MCF 10A (cell line): ENCODE measurements at regions of chr18 and their contacts with region 1.

Region 1: GRCh38 chr18:54269893-54270844 is 852 bp downstream of the POLI start:
- DNase-seq: peak; percentile 75
- H3K4me3 Mint-ChIP-seq: peak overlapping the region; percentile 76
- H3K27ac Mint-ChIP-seq: peak overlapping the region; percentile 90
- H3K4me1 Mint-ChIP-seq: peaks cover 13% of the 10 kb centered on the region
- H3K27me3 Mint-ChIP-seq: no peaks in the 10 kb centered on the region
- CTCF ChIP-seq: peak; percentile 45

Region 2: GRCh38 chr18:53909668-53910067 is 360.5 kb before region 1 on chr18:
- CTCF ChIA-PET with region 1: no interaction called
- POLR2A ChIA-PET with region 1: no interaction called
- intact Hi-C with region 1: loop called (anchors 5 kb)
- DNase-seq: peak; percentile 63
- H3K4me3 Mint-ChIP-seq: no peak overlapping the region
- H3K27ac Mint-ChIP-seq: no peak overlapping the region
- H3K4me1 Mint-ChIP-seq: no peaks in the 10 kb centered on the region
- H3K27me3 Mint-ChIP-seq: peaks cover 11% of the 10 kb centered on the region
- CTCF ChIP-seq: peak; percentile 57

Region 3: DNA sequence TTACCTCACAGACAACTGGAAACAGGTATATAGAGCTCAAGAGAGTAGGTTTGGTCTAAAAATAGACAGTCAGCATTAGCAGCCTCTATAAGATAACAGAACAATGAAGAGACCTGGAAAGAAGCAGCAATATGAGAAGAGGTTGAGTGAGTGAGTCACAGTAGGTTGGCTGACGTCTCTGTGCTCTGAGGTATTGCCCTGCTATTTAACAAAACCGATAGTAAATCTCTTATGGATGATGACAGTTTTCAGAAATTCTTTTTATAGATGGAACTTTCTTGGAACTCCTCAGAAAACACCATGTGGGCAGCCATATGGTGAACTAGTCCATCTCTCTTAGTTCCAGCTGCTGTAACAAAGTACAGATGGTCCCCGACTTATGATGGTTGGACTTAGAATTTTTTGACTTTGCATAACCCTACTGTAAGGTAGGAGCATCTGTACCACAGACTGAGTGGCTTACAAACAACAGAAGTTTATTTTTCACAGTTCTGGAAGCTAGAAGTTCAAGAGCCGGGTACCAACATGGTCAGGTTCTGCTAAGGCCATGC is 169.2 kb before region 1 on chr18:
- CTCF ChIA-PET with region 1: no interaction called
- POLR2A ChIA-PET with region 1: no interaction called
- intact Hi-C with region 1: no loop called
- DNase-seq: peak; percentile 30
- H3K4me3 Mint-ChIP-seq: no peak overlapping the region
- H3K27ac Mint-ChIP-seq: no peak overlapping the region
- H3K4me1 Mint-ChIP-seq: no peaks in the 10 kb centered on the region
- H3K27me3 Mint-ChIP-seq: no peaks in the 10 kb centered on the region
- CTCF ChIP-seq: no peak

Region 4: DNA sequence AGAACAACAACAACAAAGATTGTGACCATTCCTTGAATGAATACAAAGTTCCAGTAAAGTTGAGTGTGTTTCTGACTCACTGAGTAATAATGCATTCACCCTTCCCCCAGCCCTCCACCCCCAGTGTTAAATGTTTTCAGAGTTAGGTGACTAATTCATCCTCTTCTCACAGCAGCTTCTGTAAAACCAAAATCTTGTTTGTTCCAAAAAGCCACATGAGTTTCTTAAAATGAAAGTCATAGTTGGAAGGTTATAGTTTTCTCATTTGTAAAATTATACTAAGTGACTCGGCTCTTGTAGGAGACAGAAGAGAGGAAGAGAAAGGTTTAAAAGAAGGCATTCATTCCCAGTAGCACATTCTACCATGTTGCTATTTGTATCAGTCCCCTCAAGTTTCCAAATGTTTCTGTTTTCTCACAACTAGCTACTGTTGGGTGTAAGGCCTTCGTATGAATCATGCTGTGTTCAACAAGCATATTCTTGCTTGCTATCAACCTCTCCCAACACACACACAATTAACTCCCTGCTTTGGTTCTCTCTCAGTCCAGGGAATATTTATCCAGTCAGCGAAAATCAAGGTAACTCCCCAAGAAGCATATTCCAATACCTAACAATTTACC is 121.0 kb before region 1 on chr18:
- CTCF ChIA-PET with region 1: interaction called, 7 read pairs
- POLR2A ChIA-PET with region 1: interaction called, 7 read pairs
- intact Hi-C with region 1: loop called (anchors 1 kb)
- DNase-seq: peak; percentile 93
- H3K4me3 Mint-ChIP-seq: peak overlapping the region; percentile 65
- H3K27ac Mint-ChIP-seq: peak overlapping the region; percentile 99
- H3K4me1 Mint-ChIP-seq: peaks cover 42% of the 10 kb centered on the region
- H3K27me3 Mint-ChIP-seq: no peaks in the 10 kb centered on the region
- CTCF ChIP-seq: no peak

Region 5: GRCh38 chr18:54232485-54233227 is 37.5 kb before region 1 on chr18:
- CTCF ChIA-PET with region 1: interaction called, 15 read pairs
- POLR2A ChIA-PET with region 1: interaction called, 13 read pairs
- intact Hi-C with region 1: no loop called
- DNase-seq: peak; percentile 15
- H3K4me3 Mint-ChIP-seq: no peak overlapping the region
- H3K27ac Mint-ChIP-seq: no peak overlapping the region
- H3K4me1 Mint-ChIP-seq: peaks cover 6% of the 10 kb centered on the region
- H3K27me3 Mint-ChIP-seq: no peaks in the 10 kb centered on the region
- CTCF ChIP-seq: no peak

Region 6: GRCh38 chr18:54247511-54248175 is 22.5 kb before region 1 on chr18:
- CTCF ChIA-PET with region 1: interaction called, 25 read pairs
- POLR2A ChIA-PET with region 1: interaction called, 48 read pairs
- intact Hi-C with region 1: no loop called
- DNase-seq: no peak
- H3K4me3 Mint-ChIP-seq: no peak overlapping the region
- H3K27ac Mint-ChIP-seq: peak overlapping the region; percentile 96
- H3K4me1 Mint-ChIP-seq: peaks cover 17% of the 10 kb centered on the region
- H3K27me3 Mint-ChIP-seq: no peaks in the 10 kb centered on the region
- CTCF ChIP-seq: no peak

Region 7: GRCh38 chr18:54357660-54358494 is 87.7 kb after region 1 on chr18 and contains the starts of genes C18orf54 and STARD6:
- CTCF ChIA-PET with region 1: interaction called, 3 read pairs
- POLR2A ChIA-PET with region 1: interaction called, 14 read pairs
- intact Hi-C with region 1: no loop called
- DNase-seq: peak; percentile 91
- H3K4me3 Mint-ChIP-seq: peak within 1 kb of the TSS; percentile 100
- H3K27ac Mint-ChIP-seq: peak within 1 kb of the TSS; percentile 99
- H3K4me1 Mint-ChIP-seq: peaks cover 6% of the 10 kb centered on the region
- H3K27me3 Mint-ChIP-seq: no peaks in the 10 kb centered on the region
- CTCF ChIP-seq: peak; percentile 62
- total RNA-seq, gene C18orf54: 4.4 and 5.5 TPM in 2 replicates
- total RNA-seq, gene STARD6: not detected in 2 replicates

Region 8: DNA sequence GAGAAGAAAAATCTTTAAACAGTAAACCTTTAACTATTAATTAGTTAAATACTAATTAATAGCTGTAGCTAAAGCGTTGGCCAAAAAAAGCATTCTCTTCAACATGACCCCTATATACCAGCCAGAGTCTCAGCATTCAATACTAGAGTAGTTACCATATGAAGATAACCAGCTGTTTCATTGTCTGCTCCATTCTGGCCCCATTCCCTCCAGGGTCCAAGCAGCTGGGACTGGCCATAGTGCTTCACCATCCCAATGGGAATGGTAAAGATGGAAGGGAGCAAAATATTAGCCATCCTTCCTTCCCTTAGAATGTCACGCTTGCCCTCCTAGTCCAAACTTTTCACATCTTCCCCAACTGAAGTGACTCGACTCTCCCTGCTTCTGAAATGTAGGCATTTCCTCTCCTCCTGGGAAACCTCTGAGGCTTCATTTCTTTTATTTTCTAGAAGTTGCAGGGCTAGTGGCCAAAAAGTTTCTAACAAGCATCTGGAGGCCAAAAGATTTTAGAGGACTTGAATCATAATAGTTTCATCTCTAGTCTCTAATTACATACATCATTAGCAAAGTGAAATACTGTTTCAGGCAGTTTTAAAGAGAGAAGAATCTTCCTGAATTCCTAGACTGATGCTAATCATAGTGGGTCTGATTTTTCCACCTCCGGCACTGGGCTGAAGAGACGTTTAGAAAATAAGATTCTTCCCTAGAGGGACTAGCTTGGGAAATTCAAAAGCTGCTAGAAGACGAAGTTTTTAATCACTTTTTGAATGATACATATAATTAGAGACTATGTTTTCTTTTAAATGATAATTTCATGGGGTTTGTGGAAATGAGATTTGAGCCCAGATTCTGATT is 636.4 kb after region 1 on chr18:
- CTCF ChIA-PET with region 1: no interaction called
- POLR2A ChIA-PET with region 1: no interaction called
- intact Hi-C with region 1: no loop called
- DNase-seq: no peak
- H3K4me3 Mint-ChIP-seq: no peak overlapping the region
- H3K27ac Mint-ChIP-seq: no peak overlapping the region
- H3K4me1 Mint-ChIP-seq: no peaks in the 10 kb centered on the region
- H3K27me3 Mint-ChIP-seq: no peaks in the 10 kb centered on the region
- CTCF ChIP-seq: no peak